Activated T-helper 1 cell treated with anti-CD3 and anti-CD28 coated beads, Interleukin-12 subunit alpha, Interleukin-12 subunit beta, Interleukin-2, Interleukin-4 antibody, amounts not matched to agents 30 ng/mL and 10 ng/mL and 1 ng/mL, durations not matched to agents 14 hours and 24 hours and 36 hours (primary cell): ENCODE measurements at regions of chr6 and their contacts with region 1.

Region 1: GRCh38 chr6:151723152-151723551 is 84.3 kb upstream of the ESR1 start:
- DNase-seq: peak; percentile 34
- H3K4me3 Mint-ChIP-seq: no peak overlapping the region
- H3K27ac Mint-ChIP-seq: peak overlapping the region; percentile 32
- H3K4me1 Mint-ChIP-seq: peaks cover 52% of the 10 kb centered on the region
- H3K27me3 Mint-ChIP-seq: peaks cover 2% of the 10 kb centered on the region

Region 2: DNA sequence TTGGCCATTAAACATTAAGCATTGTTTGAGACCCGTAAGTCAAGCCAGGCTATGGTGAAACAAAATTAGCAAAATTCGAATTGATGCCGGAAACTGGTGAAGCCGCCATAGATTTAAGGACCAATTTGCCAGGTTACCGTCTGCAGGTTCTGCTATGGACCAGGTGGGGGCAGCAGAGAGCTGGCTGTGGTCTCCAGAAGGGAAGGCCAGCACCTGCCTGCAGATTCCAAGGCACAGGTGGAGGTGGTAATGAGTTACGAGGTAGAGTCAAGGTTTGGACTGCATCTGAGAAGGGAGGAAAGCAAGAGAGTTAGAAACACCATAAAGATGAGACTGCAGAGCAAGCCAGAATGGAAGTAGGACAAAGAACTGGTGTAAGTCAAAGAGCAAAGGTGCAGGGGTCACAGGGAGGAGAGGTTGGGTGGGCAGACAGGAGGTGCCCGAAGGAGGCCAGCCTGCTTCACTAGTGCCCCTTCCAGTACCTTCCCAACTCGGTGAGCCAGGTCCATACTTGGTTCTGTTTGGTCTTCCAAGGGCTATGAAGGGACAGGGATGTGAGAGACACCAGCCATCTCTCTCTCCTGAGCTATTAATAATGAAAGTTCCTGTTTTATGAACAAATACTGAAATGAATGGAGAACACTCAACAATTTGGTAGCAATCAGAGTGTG is 47.3 kb before region 1 on chr6:
- intact Hi-C with region 1: loop called (anchors 2 kb)
- DNase-seq: peak; percentile 42
- H3K4me3 Mint-ChIP-seq: no peak overlapping the region
- H3K27ac Mint-ChIP-seq: no peak overlapping the region
- H3K4me1 Mint-ChIP-seq: peaks cover 14% of the 10 kb centered on the region
- H3K27me3 Mint-ChIP-seq: peaks cover 2% of the 10 kb centered on the region

Region 3: GRCh38 chr6:151709329-151709728 is 13.8 kb before region 1 on chr6:
- intact Hi-C with region 1: loop called (anchors 1 kb)
- DNase-seq: no peak
- H3K4me3 Mint-ChIP-seq: no peak overlapping the region
- H3K27ac Mint-ChIP-seq: no peak overlapping the region
- H3K4me1 Mint-ChIP-seq: peaks cover 21% of the 10 kb centered on the region
- H3K27me3 Mint-ChIP-seq: no peaks in the 10 kb centered on the region

Region 4: DNA sequence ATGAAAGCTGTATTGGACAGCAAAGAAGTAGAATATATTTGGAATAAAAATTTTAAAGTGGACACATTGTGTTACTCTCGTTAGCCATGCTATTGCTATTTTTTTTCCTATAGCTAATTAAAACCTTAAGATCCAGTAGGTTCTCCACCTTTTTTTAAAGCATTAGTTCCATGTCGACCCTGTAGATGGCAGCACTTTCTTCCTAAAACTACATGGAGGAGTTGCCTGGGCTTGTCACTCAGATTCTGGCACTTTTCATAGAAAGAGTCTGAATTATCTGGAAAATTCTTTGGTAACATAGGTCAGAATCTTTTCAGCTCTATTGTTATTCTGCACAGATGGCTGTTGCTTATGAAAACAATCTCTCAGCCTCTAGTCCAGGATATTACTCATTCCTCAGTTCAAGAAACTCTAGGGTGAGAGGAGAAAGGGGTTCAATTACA is 42.3 kb after region 1 on chr6:
- intact Hi-C with region 1: loop called (anchors 2 kb)
- DNase-seq: peak; percentile 40
- H3K4me3 Mint-ChIP-seq: no peak overlapping the region
- H3K27ac Mint-ChIP-seq: no peak overlapping the region
- H3K4me1 Mint-ChIP-seq: peaks cover 34% of the 10 kb centered on the region
- H3K27me3 Mint-ChIP-seq: peaks cover 22% of the 10 kb centered on the region

Region 5: GRCh38 chr6:152301764-152302568 is 578.8 kb after region 1 on chr6:
- intact Hi-C with region 1: loop called (anchors 1 kb)
- DNase-seq: peak; percentile 88
- H3K4me3 Mint-ChIP-seq: peak overlapping the region; percentile 98
- H3K27ac Mint-ChIP-seq: peak overlapping the region; percentile 99
- H3K4me1 Mint-ChIP-seq: peaks cover 41% of the 10 kb centered on the region
- H3K27me3 Mint-ChIP-seq: peaks cover 4% of the 10 kb centered on the region